ENCODE measurements at regions of chr2 and their contacts with region 1.

Region 1: DNA sequence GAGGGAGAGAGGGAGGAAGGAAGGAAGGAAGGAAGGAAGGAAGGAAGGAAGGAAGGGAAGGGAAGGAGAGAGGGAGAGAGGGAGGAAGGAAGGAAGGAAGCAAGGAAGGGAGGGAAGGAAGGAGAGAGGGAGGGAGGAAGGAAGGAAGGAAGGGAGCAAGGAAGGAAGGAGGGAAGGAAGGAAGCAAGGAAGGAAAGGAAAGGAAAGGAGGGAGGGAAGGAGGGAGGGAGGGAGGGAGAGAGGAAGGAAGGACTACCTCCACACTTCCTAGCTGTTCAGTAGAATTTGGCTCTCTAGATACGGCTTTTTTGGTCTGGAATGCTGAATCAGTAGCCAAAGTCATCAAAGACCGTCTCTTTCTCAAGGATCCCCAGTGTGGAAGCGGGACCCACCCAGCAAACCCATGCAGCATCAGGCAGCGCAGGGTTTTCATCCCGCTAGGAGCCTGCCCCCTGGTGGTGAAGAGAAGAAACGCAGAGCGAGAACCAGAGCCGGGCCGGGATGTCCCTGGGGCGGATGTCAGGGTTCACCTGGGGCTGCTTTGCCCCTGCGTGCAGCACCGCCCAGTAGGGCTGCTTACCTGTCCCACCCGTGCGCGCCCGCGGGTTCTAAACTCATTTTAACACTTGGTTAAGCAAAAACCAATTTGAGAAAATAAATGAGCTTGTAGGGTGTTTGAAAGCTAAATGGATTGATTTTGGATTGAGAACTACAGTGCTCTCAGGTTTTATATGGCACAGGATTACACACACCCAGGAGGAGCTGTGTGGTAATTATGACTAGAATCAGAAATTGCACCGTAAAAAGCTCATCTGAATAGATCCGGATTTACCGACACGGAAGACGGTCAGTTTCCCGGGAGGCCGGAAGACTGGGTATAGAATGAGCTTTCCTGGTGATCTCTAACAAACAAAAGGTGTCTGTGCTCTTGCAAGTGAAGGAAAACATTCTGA is 48.1 kb upstream of the ARL4C start:
- DNase-seq: peak; percentile 75 to 84
- H3K4me3 ChIP-seq: no peak overlapping the region
- H3K27ac ChIP-seq: no peak overlapping the region
- H3K4me1 ChIP-seq: peaks cover 0 to 5% (median 2%) of the 10 kb centered on the region in 4 donors
- H3K27me3 ChIP-seq: peaks cover 0 to 31% (median 0%) of the 10 kb centered on the region in 3 donors
- CTCF ChIP-seq: peak in 5 of 7 experiments; percentile 50 to 96 (median 91)
- EP300 ChIP-seq: no peak
- POLR2A ChIP-seq: no peak

Region 2: DNA sequence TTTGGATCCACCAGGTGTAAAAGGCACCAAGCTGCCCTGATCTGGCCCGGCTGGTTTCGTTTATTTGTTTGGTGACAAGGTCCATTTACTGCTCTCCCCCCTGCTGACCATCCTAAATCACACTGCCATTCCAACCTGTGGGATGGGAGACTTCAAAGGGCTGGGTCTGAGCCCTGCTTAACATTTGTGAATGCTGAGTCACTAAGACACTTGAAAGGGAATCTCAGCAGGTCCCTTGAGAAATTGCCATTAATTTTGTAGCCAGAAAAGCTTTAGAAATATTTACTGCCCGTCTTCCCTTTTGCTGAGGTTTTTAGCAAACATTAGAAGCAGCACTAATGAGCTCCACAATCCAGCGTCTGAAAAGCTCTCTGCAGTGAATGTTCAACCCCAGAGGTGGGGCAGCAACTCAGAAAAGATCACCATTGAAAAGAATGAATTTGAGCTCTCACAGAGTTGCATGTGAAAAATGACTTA is 181.9 kb before region 1 on chr2:
- intact Hi-C with region 1: no loop called
- DNase-seq: no peak
- H3K4me3 ChIP-seq: no peak overlapping the region
- H3K27ac ChIP-seq: no peak overlapping the region
- H3K4me1 ChIP-seq: peaks cover 7 to 28% (median 18%) of the 10 kb centered on the region in 4 donors
- H3K27me3 ChIP-seq: no peaks in the 10 kb centered on the region
- CTCF ChIP-seq: no peak
- EP300 ChIP-seq: no peak
- POLR2A ChIP-seq: no peak

Region 3: DNA sequence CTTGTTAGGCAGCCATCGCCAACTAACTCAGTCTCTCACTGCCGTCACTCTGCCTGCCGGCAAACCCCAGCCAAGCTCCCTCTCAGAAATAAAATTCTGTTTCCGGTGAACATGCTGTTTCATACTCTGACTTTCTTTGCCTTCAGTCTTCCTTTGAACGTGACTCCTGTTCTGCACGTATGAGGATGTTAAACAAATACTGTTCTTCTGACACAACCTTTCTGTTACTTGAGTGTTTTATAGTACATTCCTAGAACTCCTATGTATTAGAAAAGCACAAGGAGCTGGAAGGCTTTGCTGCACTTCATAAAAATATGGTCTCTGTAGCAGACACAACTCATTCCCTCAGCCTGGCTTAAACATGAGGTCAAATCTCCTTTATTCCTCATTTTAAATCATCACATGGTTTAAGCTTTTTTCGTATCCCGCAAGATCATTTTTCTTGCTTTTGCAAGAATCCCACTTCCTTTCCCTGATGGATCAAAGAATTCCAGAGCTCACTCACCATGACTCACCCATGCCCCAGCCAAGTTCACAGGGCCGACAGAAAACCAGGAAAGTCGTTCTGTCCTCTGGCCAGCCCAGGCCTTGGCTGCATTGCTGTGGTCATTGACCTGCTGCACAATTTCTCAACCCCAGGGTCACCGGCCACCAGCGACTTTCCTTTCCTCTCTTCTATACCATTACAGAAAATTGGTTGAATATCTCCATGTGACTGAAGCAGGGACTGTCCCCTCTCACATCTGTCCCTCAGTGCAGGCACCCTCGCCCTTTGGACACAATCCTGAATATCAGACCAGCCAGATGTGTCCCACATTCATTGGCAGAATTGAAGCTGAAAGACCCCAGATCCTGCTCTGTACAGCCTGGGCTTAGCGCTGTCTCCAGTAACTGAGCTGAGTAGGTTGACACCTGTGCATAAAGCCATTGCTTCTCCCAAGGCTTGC is 135.1 kb after region 1 on chr2:
- intact Hi-C with region 1: loop called (anchors 10 kb)
- DNase-seq: peak; percentile 39 to 55
- H3K4me3 ChIP-seq: no peak overlapping the region
- H3K27ac ChIP-seq: peak overlapping the region in 4 of 5 donors; percentile 13 to 67 (median 44)
- H3K4me1 ChIP-seq: peaks cover 15 to 40% (median 24%) of the 10 kb centered on the region in 4 donors
- H3K27me3 ChIP-seq: no peaks in the 10 kb centered on the region
- CTCF ChIP-seq: no peak
- EP300 ChIP-seq: no peak
- POLR2A ChIP-seq: no peak